ENCODE measurements at regions of chr7 and their contacts with region 1.

Region 1: DNA sequence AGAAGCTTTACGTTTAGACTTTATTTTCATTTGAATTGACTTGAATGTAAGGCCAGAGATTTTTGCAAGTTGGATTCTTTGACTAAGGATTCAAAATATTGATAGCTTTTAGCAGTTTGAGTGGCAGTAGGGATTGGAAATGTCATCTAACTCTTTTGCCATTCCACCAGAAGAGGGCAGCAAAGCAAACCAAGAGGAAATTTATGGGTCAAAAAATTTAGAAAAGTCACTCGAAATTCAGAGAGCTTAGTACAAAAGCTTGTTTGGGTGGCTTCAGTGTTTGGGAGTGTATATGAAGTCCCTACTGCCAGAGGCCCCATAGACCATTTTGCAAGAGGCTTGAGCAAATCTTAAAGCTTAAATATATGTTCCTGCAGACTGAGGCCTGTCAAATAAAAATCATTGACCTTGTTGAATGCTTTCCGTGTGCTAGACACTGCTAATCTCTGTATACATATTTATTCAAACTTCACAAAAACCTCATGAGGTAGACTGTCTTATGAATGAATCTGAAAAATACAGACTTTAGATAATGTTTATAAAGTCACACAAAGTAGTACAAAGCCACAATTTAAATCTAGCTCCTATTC is 44.6 kb upstream of the RSBN1L start:
- DNase-seq: peak; percentile 46
- ATAC-seq: no peak
- H3K4me3 Mint-ChIP-seq: no peak overlapping the region
- H3K27ac Mint-ChIP-seq: no peak overlapping the region
- H3K4me1 Mint-ChIP-seq: no peaks in the 10 kb centered on the region
- H3K27me3 Mint-ChIP-seq: no peaks in the 10 kb centered on the region
- CTCF ChIP-seq: peak; percentile 77

Region 2: GRCh38 chr7:77667459-77668086 is 15.9 kb after region 1 on chr7:
- CTCF ChIA-PET with region 1: interaction called, 10 read pairs
- POLR2A ChIA-PET with region 1: no interaction called
- intact Hi-C with region 1: no loop called
- DNase-seq: no peak
- ATAC-seq: no peak
- H3K4me3 Mint-ChIP-seq: no peak overlapping the region
- H3K27ac Mint-ChIP-seq: no peak overlapping the region
- H3K4me1 Mint-ChIP-seq: no peaks in the 10 kb centered on the region
- H3K27me3 Mint-ChIP-seq: no peaks in the 10 kb centered on the region
- CTCF ChIP-seq: no peak

Region 3: GRCh38 chr7:77696198-77697028 is 44.7 kb after region 1 on chr7 and contains the start of gene RSBN1L:
- CTCF ChIA-PET with region 1: interaction called, 26 read pairs
- POLR2A ChIA-PET with region 1: interaction called, 4 read pairs
- intact Hi-C with region 1: no loop called
- DNase-seq: peak; percentile 99
- ATAC-seq: peak; percentile 98
- H3K4me3 Mint-ChIP-seq: peak within 1 kb of the TSS; percentile 99
- H3K27ac Mint-ChIP-seq: peak within 1 kb of the TSS; percentile 97
- H3K4me1 Mint-ChIP-seq: peaks cover 44% of the 10 kb centered on the region
- H3K27me3 Mint-ChIP-seq: no peaks in the 10 kb centered on the region
- CTCF ChIP-seq: peak; percentile 36
- total RNA-seq, gene RSBN1L: 16.5 to 21.9 TPM

Region 4: DNA sequence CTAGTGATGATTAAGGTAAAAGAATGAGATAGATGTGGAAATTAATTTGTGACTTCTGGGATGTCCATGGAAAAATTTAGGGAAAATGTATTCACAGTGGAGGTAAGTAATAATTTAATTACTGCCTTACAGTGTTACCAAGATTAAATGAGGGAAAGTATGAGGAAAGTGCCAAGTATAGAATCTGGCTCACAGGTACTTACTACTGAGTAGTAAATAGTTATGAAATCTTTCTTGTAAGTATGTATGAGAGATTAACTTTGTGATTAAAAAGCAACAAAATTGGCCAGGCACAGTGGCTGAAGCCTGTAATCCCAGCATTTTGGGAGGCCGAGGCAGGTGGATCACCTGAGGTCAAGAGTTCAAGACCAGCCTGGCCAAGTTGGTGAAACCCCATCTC is 86.7 kb after region 1 on chr7:
- CTCF ChIA-PET with region 1: interaction called, 11 read pairs
- POLR2A ChIA-PET with region 1: no interaction called
- intact Hi-C with region 1: no loop called
- DNase-seq: no peak
- ATAC-seq: no peak
- H3K4me3 Mint-ChIP-seq: no peak overlapping the region
- H3K27ac Mint-ChIP-seq: no peak overlapping the region
- H3K4me1 Mint-ChIP-seq: peaks cover 15% of the 10 kb centered on the region
- H3K27me3 Mint-ChIP-seq: no peaks in the 10 kb centered on the region
- CTCF ChIP-seq: no peak

Region 5: DNA sequence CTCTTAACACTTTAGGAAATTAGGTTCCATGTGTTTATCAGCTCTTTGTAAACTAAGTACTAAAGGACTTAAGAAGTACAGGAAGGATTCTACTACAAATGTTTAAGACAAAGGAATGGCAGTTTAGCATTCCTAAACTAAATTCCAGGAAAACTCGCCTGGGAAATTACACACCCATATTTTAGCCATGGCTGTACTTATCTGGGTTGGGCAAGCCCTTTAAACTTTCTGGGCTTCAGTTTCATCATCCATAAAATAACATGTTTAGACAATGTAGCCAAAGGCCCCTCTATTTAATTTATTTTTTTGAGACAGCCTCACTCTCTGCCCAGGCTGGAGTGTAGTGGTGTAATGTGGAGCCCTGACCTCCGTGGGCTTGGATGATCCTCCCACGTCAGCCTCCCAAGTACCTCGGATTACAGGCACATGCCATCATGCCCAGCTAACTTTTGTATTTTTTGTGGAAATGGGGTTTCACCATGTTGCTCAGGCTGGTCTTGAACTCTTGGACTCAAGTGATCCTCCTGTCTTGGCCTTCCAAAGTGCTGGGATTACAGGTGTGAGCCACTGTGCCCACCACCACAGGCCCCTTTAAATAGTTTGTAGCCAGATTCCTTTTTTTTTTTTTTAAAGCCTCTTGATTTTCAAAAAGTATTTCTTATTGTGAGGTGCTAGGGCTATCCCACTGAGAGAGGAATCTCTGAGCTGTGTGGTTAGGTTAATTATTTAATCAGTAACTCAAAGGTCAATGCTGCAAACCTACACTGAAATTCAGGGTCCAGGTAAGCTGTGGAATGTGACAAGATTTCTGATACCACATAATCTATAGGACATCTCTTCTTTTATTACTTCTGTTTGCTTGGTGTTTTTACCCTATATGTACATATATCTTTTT is 114.5 kb after region 1 on chr7:
- CTCF ChIA-PET with region 1: interaction called, 176 read pairs
- POLR2A ChIA-PET with region 1: no interaction called
- intact Hi-C with region 1: no loop called
- DNase-seq: no peak
- ATAC-seq: no peak
- H3K4me3 Mint-ChIP-seq: no peak overlapping the region
- H3K27ac Mint-ChIP-seq: no peak overlapping the region
- H3K4me1 Mint-ChIP-seq: peaks cover 16% of the 10 kb centered on the region
- H3K27me3 Mint-ChIP-seq: no peaks in the 10 kb centered on the region
- CTCF ChIP-seq: no peak

Region 6: DNA sequence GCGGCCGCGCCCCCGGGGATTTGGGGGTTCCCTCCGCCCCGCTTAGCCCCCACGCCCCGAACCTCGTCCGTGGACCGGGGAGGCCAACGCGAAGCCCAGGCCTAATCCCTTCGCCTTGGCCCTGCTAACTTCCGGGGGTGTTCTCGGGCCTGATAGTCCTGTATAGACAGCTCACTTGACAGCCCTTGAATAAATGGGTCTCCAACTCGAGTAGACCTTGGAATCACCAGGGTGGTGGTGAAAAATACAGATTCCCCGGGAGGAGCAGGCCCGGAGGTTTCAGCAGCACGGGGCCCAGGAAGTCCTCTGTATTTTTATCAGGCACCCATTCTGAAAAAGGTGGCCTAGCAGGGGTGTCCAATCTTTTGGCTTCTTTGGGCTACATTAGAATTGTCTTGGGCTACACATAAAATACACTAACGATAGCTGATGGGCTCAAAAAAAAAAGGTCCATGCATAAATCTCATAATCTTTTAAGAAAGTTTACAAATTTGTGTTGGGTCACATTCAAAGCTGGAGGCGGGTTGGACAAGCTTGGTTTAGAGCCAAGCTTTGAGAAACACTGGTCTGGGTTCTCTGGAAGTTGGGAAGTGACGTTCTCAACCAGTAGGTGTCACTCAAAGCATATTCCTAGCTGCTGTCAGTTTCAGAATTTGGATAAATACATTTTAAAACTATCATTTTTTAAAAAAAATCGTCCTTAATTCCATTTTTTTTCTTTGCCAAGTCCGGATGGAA is 368.6 kb after region 1 on chr7:
- CTCF ChIA-PET with region 1: interaction called, 10 read pairs
- POLR2A ChIA-PET with region 1: no interaction called
- intact Hi-C with region 1: no loop called
- DNase-seq: peak; percentile 37
- ATAC-seq: peak; percentile 50
- H3K4me3 Mint-ChIP-seq: peak overlapping the region; percentile 63
- H3K27ac Mint-ChIP-seq: no peak overlapping the region
- H3K4me1 Mint-ChIP-seq: peaks cover 5% of the 10 kb centered on the region
- H3K27me3 Mint-ChIP-seq: peaks cover 27% of the 10 kb centered on the region
- CTCF ChIP-seq: peak; percentile 74